ENCODE measurements at regions of chr9 and their contacts with region 1.

Region 1: DNA sequence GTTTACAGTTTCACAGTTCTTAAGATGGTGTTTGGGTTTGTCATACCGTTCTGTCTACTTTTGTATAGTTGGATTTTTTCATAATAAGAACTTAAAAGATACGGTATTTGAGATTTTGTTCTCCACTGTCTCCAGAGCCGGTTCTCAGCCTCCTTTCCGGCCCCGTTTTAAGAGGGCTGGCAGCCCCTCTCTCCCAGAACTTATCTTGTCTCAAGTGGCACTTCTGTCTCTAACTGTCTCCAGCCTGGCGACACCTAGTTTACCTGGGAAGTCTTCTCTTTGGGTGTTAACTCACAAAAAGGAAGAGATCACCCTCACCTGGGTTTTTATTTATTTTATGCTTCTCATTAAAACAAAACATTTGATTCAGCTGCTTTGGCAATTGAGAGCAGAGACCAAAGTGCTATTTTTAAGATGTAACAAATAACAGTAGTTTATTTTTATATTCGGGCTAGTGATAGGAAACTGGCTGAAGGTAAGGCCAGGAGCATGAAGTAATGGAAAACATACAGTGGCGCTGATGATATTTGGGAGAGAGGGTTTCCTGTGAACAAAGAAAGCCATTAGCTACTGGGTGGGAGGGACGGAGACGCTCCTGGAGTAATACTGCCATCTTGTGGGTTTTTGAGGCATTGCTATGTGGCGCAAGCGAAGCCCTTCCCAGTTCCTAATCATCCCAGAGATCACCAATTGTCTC is 48.3 kb downstream of the ACER2 start:
- DNase-seq: peak; percentile 59
- H3K4me3 Mint-ChIP-seq: peak overlapping the region; percentile 35
- H3K27ac Mint-ChIP-seq: peak overlapping the region; percentile 16
- H3K4me1 Mint-ChIP-seq: peaks cover 15% of the 10 kb centered on the region
- H3K27me3 Mint-ChIP-seq: peaks cover 9% of the 10 kb centered on the region

Region 2: GRCh38 chr9:19048966-19049916 is 407.9 kb before region 1 on chr9 and contains the start of gene RRAGA:
- intact Hi-C with region 1: loop called (anchors 1 kb)
- DNase-seq: peak; percentile 92
- H3K4me3 Mint-ChIP-seq: peak within 1 kb of the TSS; percentile 96
- H3K27ac Mint-ChIP-seq: peak within 1 kb of the TSS; percentile 99
- H3K4me1 Mint-ChIP-seq: peaks cover 43% of the 10 kb centered on the region
- H3K27me3 Mint-ChIP-seq: peaks cover under 1% of the 10 kb centered on the region
- total RNA-seq, gene RRAGA: 56.8 and 56.9 TPM in 2 replicates

Region 3: DNA sequence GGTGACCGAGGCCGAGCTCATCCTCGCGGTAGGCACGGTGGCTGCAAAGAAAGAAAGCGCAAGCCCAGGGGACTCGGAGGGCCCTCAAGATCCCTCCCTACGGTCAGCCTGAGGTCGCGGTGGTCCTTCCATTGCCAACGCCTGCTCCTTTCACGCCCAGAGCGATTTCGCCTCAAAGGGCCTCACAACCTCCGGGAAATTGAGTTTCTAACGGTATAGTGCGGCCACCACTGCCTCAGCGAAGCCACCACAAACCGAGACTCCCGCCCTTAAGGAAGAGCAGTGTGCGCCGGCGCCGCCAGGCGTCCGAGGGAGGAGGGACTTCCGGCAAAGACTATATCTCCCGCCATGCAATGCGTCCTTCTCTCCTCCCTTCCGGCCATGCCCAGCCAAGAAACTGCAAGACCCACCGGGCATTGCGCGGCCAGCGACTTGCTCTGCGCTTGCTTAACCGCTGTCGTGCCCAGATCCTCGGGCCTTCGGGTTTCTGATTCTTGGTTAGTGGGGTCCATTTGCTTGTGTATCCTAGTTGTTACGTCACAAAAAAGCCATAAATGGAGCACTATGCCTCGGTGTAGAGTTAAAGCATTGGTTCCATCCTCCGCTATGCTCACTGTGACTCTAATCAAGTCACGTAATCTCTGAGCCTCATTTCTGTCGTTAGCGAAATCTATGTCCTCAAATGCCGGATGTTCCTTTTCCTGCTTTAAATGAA is 354.4 kb before region 1 on chr9 and contains the start of gene HAUS6:
- intact Hi-C with region 1: loop called (anchors 1 kb)
- DNase-seq: peak; percentile 92
- H3K4me3 Mint-ChIP-seq: peak within 1 kb of the TSS; percentile 94
- H3K27ac Mint-ChIP-seq: peak within 1 kb of the TSS; percentile 96
- H3K4me1 Mint-ChIP-seq: peaks cover 16% of the 10 kb centered on the region
- H3K27me3 Mint-ChIP-seq: no peaks in the 10 kb centered on the region
- total RNA-seq, gene HAUS6: 31.8 and 31.9 TPM in 2 replicates

Region 4: DNA sequence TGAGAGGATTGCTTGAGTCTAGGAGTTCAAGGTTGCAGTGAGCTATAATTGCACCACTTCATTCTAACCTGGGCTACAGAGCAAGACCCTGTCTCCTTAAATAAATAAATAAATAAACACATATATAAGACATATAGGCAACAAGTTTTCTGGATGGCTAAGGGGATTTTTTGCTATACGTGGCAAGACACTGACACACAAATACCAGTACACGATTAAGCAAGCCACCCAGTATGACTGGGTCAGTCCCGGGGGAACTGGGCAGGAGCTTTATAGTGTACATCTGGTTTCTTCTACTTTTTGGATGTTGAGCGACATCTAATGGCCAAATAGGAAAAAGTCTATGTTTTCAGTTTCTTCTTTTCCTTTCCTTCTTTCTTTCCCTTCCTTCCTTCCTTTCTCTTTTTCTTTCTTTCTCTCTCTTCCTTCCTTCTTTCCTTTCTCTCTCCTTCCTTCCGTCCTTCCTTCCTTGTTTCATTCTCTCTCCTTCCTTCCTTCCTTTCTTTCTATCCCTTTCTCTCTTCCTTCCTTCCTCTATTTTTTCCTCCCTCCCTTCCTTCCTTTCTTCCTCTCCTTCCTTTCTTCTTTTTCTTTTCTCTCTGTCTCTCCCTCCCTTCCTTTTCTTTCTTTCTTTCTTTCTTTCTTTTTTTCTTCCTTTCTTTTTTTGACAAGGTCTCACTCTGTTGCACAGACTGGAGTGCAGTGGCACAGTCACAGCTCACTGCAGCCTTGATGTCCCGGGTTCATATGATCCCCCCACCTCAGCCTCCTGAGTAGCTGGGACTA is 282.8 kb before region 1 on chr9:
- intact Hi-C with region 1: loop called (anchors 2 kb)
- DNase-seq: peak; percentile 32
- H3K4me3 Mint-ChIP-seq: no peak overlapping the region
- H3K27ac Mint-ChIP-seq: peak overlapping the region; percentile 15
- H3K4me1 Mint-ChIP-seq: peaks cover 22% of the 10 kb centered on the region
- H3K27me3 Mint-ChIP-seq: peaks cover 2% of the 10 kb centered on the region

Region 5: GRCh38 chr9:19230356-19231125 is 226.6 kb before region 1 on chr9 and contains the start of gene DENND4C:
- intact Hi-C with region 1: loop called (anchors 1 kb)
- DNase-seq: peak; percentile 83
- H3K4me3 Mint-ChIP-seq: peak within 1 kb of the TSS; percentile 77
- H3K27ac Mint-ChIP-seq: peak within 1 kb of the TSS; percentile 73
- H3K4me1 Mint-ChIP-seq: peaks cover 8% of the 10 kb centered on the region
- H3K27me3 Mint-ChIP-seq: no peaks in the 10 kb centered on the region
- total RNA-seq, gene DENND4C: 18.4 and 21.1 TPM in 2 replicates

Region 6: GRCh38 chr9:19397845-19398244 is 59.3 kb before region 1 on chr9:
- intact Hi-C with region 1: no loop called
- DNase-seq: no peak
- H3K4me3 Mint-ChIP-seq: no peak overlapping the region
- H3K27ac Mint-ChIP-seq: no peak overlapping the region
- H3K4me1 Mint-ChIP-seq: no peaks in the 10 kb centered on the region
- H3K27me3 Mint-ChIP-seq: peaks cover 5% of the 10 kb centered on the region

Region 7: GRCh38 chr9:19408693-19409400 is 48.3 kb before region 1 on chr9 and contains the start of gene ACER2:
- intact Hi-C with region 1: loop called (anchors 1 kb)
- DNase-seq: peak; percentile 95
- H3K4me3 Mint-ChIP-seq: peak within 1 kb of the TSS; percentile 97
- H3K27ac Mint-ChIP-seq: peak within 1 kb of the TSS; percentile 27
- H3K4me1 Mint-ChIP-seq: peaks cover 18% of the 10 kb centered on the region
- H3K27me3 Mint-ChIP-seq: peaks cover 10% of the 10 kb centered on the region
- total RNA-seq, gene ACER2: 1.3 and 1.4 TPM in 2 replicates

Measured in activated T-helper 1 cell treated with anti-CD3 and anti-CD28 coated beads, Interleukin-12 subunit alpha, Interleukin-12 subunit beta, Interleukin-2, Interleukin-4 antibody, amounts not matched to agents 30 ng/mL and 10 ng/mL and 1 ng/mL, durations not matched to agents 14 hours and 24 hours and 36 hours (primary cell).